GM10248 (cell line): ENCODE measurements at regions of chr11 and their contacts with region 1.

Region 1: DNA sequence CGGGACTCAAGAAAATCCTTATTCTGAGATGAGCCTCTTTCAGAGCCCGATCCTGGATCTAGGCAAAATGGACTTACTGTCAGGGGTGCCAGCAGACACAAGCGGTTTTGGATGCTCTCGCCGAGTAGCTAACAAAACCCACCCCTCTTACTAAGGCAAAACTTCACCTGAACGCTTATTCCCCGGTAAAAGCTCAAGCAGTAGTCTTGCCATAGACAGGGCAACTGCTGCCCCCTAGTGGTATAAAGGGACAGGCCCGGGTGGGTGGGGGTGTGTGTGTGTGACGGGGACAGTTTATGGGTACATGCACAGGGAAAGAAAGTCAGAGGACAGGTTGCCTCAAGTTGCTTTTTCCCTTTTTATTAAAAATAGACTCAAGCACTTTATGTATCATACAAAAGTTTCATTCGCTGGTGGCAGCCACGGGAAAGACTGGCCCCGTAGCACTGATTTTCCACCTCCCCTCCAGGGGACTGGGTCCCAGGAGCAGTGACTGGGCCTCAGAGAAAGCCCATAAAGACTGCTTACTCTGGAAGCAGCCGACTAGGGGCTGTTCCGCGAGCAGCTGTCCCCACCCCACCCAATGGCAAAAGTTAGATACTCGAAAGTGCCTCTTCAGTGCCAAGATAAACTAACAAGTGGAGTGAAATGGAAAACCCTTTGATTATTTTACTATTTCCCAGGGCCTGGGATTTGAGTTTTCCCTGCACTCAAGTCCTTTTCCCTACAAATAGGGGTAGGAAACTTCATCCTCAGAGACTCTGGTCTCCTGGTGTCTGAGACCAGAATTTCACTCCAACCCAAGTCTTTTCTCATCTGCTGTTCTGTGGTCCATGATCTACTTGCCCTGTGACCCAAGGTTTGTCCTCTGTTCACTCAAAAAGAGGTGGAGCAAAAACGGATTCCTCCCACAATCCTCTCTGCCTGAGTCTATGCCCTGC is 4.7 kb downstream of the YPEL4 start:
- DNase-seq: peak; percentile 82
- CTCF ChIP-seq: peak; percentile 65

Region 2: DNA sequence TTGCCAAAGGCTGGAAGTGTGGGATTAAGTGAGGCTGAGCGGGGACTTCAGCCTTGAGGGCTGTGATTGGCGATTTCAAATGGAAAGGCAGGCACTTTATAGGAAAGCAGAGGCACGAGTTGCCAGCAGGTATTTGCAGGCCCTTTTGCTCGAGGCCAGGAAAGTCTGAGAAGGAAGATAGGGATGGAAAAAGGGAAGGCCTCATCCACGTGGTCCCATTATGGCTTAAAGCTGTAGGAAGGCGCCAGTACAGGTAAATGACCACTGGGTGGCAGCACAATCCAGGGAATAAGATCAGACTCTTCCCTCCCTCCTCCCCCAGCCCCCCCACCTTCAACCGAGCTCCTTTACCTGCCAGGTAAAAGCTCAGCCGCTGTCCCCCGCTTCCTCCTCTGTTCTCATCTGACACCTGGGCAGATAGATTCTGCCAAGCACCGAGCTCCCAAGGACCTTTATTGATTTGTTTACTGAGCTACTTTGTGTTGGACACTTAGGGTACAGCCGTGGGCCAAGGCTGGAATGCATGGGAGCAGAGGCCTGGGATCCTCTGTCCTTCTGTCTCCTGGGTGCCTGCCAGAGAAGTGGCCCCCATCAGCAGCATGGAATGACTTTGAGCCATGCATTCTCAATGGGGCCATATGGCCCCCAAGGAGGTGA is 299.3 kb before region 1 on chr11:
- CTCF ChIA-PET with region 1: interaction called, 60 read pairs
- POLR2A ChIA-PET with region 1: no interaction called
- DNase-seq: peak; percentile 80
- CTCF ChIP-seq: peak; percentile 80

Region 3: DNA sequence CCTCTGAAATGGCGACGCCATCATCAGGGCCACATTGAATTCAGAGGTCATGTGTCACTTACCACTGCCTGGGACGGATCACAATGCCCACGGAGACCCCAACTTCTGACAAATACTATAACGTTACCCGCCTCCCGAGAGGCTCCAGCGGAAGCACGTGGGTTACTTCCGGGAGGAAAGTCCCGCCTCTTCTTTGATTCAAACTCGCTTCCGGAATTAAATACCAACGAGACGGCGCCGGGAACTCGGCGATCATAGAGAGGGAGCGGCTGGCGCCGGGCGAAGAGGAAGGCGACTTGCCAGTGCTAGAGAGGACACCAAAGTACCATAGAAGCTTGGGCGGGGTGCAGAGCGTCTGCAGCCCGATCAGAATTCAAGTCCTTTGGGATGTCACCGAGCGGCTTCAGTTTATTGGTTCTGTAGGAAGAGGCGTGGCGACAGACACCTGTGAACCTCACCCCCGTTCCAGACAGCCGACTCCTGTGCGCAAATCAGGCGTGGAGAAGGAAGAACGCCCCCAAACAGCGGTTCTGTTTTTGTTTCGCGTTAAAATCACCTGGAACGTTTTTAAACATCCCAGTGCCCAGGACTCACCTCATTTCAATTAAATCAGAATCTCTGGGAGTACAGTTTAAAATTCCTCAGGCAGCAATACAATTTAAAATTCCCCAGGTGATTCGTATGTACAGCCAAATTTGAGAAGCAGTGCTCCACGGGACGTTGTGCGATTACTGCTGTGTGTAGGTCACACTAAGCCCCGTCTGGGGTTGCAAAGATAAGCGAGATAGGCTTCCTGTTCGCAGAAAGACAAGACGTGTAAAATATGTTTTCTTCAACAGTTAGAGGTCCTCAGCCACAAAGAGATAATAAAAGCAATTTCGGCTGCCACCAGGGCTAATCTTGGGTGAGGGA is 114.2 kb before region 1 on chr11 and contains the start of gene TIMM10:
- CTCF ChIA-PET with region 1: interaction called, 70 read pairs
- POLR2A ChIA-PET with region 1: interaction called, 3 read pairs
- DNase-seq: peak; percentile 92
- CTCF ChIP-seq: no peak

Region 4: GRCh38 chr11:57567515-57568329 is 77.3 kb before region 1 on chr11 and contains the start of gene UBE2L6:
- CTCF ChIA-PET with region 1: interaction called, 295 read pairs
- POLR2A ChIA-PET with region 1: no interaction called
- DNase-seq: peak; percentile 79
- CTCF ChIP-seq: peak; percentile 91

Region 5: GRCh38 chr11:57630193-57630592 is 14.8 kb before region 1 on chr11:
- CTCF ChIA-PET with region 1: interaction called, 20 read pairs
- POLR2A ChIA-PET with region 1: no interaction called
- DNase-seq: no peak
- CTCF ChIP-seq: no peak

Region 6: GRCh38 chr11:57667736-57668435 is 22.9 kb after region 1 on chr11 and contains the start of gene ZDHHC5:
- CTCF ChIA-PET with region 1: interaction called, 14 read pairs
- POLR2A ChIA-PET with region 1: no interaction called
- DNase-seq: peak; percentile 97
- CTCF ChIP-seq: peak; percentile 41

Region 7: GRCh38 chr11:57751676-57752253 is 106.7 kb after region 1 on chr11 and contains the start of gene BTBD18:
- CTCF ChIA-PET with region 1: no interaction called
- POLR2A ChIA-PET with region 1: no interaction called
- DNase-seq: peak; percentile 51
- CTCF ChIP-seq: peak; percentile 34